ENCODE measurements at regions of chr10 and their contacts with region 1.

Region 1: DNA sequence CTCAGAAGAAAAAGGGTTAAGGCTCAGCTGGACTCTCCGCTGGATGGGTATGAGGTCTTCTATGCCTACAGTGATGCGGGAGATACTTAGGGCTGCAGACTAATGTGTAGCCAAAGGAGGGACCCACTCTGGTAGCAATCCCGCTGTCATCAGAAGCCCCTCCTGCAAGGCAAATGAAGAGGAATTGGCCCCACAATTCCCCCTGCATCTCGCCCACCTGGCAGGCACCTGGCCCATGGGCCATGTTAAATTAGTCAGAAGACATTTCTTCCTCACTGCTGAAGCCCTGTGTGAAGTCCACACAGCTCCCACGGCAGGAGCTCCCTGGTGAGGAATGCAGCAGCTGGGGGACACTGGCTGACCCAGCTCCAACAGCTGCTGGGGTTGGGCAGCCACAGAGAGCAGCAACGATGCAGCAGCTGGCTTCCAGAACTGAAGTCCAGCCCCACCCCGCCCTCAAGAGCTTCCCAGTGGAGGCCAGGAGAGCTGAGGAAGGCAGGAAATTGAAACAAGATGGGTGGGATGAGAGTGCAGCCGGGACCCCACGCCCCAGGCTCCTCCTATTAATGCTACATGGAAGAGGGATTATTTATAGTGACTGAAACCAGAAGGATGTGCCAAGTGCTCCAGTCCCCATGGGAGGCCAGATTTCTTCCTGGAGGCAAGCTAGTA is 5.5 kb downstream of the VSTM4 start:
- DNase-seq: peak; percentile 34 to 79
- H3K4me3 ChIP-seq: peak overlapping the region; percentile 1 to 4
- H3K27ac ChIP-seq: peak overlapping the region; percentile 40 to 78
- H3K4me1 ChIP-seq: peaks cover 5 to 100% (median 75%) of the 10 kb centered on the region in 4 donors
- H3K27me3 ChIP-seq: no peaks in the 10 kb centered on the region
- CTCF ChIP-seq: no peak

Region 2: DNA sequence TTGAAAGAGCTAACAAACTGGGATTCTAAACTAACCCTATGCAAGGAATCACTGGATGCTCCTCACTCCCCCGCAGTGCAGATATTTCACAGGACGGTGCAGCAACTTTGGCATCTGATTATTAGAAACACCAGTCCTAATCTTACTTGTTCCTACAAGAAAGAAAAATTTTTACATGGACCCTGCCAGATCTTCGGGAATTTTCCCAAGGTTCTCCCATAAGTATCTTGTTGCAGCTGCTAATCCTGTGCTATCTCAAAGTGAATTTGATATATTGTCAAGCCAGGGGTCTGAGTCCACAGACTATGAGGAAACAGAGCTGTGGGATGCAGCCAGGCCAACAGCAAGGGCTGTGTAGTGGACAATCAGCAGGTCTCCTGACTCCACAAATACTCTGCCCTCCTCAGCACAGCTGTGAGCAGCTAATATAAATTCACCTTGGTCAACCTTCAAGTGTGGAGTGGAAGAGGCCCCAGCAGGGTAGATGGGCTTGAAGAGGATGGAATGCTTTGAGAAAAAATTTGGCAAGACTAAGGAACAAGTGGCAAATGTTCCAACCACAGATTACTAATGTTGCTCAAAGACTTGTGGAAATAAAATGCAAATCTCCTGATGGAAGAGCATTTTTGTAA is 20.1 kb before region 1 on chr10:
- intact Hi-C with region 1: loop called (anchors 2 kb)
- DNase-seq: no peak
- H3K4me3 ChIP-seq: no peak overlapping the region
- H3K27ac ChIP-seq: peak overlapping the region; percentile 32 to 41
- H3K4me1 ChIP-seq: peaks cover 0 to 29% (median 18%) of the 10 kb centered on the region in 4 donors
- H3K27me3 ChIP-seq: no peaks in the 10 kb centered on the region
- CTCF ChIP-seq: no peak